Common myeloid progenitor, CD34-positive (primary cell): ENCODE measurements at regions of chr14 and their contacts with region 1.

Region 1: DNA sequence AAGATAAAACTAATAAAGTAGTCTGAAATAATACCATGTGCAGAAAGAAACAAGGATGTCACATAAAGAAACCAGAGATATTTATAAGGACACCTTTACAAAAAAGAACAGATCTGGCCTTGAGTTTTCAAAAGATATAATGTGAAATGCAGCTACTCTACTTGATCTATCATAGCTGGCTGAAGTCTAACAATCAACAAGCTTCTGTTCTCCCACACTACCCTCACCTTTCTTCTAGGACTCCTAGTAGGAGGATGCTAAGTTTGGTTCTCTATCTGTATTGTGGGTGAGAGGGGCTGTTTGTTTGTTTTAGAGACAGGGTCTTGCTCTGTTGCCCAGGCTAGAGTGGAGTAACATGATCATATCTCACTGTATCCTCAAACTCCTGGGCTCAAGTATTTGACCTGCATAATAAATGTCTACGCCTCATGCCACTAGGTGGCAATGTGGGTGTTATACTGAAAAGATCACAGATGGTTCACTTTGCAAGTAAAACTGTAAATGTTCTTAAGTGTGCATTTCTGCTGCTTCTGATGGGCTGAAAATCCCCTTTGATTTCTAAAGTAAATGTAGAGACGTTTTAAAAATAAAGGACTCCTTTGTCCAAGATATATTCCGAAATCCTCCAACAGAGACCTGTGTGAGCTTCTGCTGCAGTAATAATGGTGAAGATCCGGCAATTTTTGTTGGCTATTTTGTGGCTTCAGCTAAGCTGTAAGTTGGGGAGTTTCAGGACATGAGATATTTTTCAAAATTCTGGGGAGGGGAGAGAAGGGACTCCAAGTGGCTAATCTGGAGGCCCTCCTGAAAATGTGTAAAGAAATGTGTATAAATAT is 269.3 kb downstream of the DAD1 start:
- DNase-seq: peak; percentile 54 to 74 (median 71)
- H3K4me3 ChIP-seq: no peak overlapping the region
- H3K27ac ChIP-seq: no peak overlapping the region
- H3K4me1 ChIP-seq: no peaks in the 10 kb centered on the region
- H3K27me3 ChIP-seq: peaks cover 0 to 3% (median 0%) of the 10 kb centered on the region in 5 experiments

Region 2: GRCh38 chr14:22375321-22375930 is 55.7 kb after region 1 on chr14:
- CTCF ChIA-PET with region 1: interaction called, 14 read pairs
- POLR2A ChIA-PET with region 1: no interaction called
- DNase-seq: peak; percentile 61 to 84 (median 82)
- H3K4me3 ChIP-seq: no peak overlapping the region
- H3K27ac ChIP-seq: no peak overlapping the region
- H3K4me1 ChIP-seq: no peaks in the 10 kb centered on the region
- H3K27me3 ChIP-seq: peaks cover 0 to 2% (median 0%) of the 10 kb centered on the region in 5 experiments

Region 3: GRCh38 chr14:22380571-22381407 is 61.0 kb after region 1 on chr14:
- CTCF ChIA-PET with region 1: interaction called, 11 read pairs
- POLR2A ChIA-PET with region 1: no interaction called
- DNase-seq: no peak
- H3K4me3 ChIP-seq: no peak overlapping the region
- H3K27ac ChIP-seq: no peak overlapping the region
- H3K4me1 ChIP-seq: peaks cover 0 to 10% (median 7%) of the 10 kb centered on the region in 4 experiments
- H3K27me3 ChIP-seq: no peaks in the 10 kb centered on the region

Region 4: GRCh38 chr14:23248601-23249000 is 928.9 kb after region 1 on chr14:
- CTCF ChIA-PET with region 1: no interaction called
- POLR2A ChIA-PET with region 1: no interaction called
- DNase-seq: no peak
- H3K4me3 ChIP-seq: no peak overlapping the region
- H3K27ac ChIP-seq: no peak overlapping the region
- H3K4me1 ChIP-seq: peaks cover 0 to 5% (median 0%) of the 10 kb centered on the region in 4 experiments
- H3K27me3 ChIP-seq: no peaks in the 10 kb centered on the region